CD4-positive, alpha-beta memory T cell (primary cell): ENCODE measurements at regions of chr2 and their contacts with region 1.

Region 1: DNA sequence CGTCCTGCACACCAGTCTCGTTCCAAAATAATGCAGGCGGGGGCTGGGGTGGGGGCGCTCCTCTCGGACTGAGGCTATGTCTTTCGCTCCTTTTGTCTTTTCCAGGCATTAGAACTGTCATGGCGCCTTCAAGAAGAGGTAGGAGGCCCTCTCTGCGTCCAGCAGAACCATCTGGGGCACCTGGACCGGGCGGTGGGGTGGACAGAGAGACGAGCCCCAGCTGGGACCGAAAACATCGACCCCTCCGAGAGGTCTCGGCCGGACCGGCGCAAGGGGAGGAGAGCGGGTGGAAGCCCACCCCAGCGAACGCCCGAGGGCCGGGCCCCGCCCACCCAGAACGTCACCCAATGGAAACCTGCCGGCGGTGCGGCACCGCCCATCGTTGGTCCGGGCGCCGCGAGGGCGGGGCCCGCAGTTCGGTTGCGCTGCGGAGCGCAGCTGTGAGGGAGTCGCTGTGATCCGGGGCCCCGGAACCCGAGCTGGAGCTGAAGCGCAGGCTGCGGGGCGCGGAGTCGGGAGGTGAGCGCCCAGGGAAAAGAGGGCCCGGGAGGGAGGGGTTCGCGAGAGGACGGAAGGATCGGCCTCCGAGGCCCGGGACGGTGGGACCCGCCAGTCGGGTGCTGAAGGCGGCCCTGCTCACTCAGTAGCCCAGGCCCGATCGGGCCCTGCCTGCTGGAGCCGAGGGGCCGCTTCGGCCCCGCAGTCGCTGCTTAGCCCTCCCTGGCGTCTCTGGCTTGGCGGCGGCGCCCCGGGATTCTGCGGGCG is at the start of gene NRBP1:
- DNase-seq: peak; percentile 86 to 91 (median 89)
- H3K4me3 ChIP-seq: peak within 1 kb of the TSS; percentile 64 to 76
- H3K4me3 Mint-ChIP-seq: peak within 1 kb of the TSS; percentile 97 to 100 (median 98)
- H3K27ac ChIP-seq: peak within 1 kb of the TSS; percentile 93
- H3K27ac Mint-ChIP-seq: peak within 1 kb of the TSS; percentile 96 to 99 (median 98)
- H3K4me1 ChIP-seq: peaks cover 45% of the 10 kb centered on the region
- H3K4me1 Mint-ChIP-seq: peaks cover 24 to 44% (median 35%) of the 10 kb centered on the region in 4 donors
- H3K27me3 ChIP-seq: no peaks in the 10 kb centered on the region
- H3K27me3 Mint-ChIP-seq: no peaks in the 10 kb centered on the region
- total RNA-seq, gene NRBP1: 115 to 119 TPM

Region 2: GRCh38 chr2:27086090-27086723 is 342.2 kb before region 1 on chr2:
- CTCF ChIA-PET with region 1: no interaction called
- POLR2A ChIA-PET with region 1: interaction called, 4 read pairs
- intact Hi-C with region 1: loop called (anchors 5 kb)
- DNase-seq: peak; percentile 93 to 99 (median 98)
- H3K4me3 ChIP-seq: peak overlapping the region; percentile 11 to 75
- H3K4me3 Mint-ChIP-seq: peak overlapping the region; percentile 82 to 90 (median 86)
- H3K27ac ChIP-seq: peak overlapping the region; percentile 80
- H3K27ac Mint-ChIP-seq: peak overlapping the region; percentile 82 to 94 (median 89)
- H3K4me1 ChIP-seq: peaks cover 32% of the 10 kb centered on the region
- H3K4me1 Mint-ChIP-seq: peaks cover 9 to 37% (median 23%) of the 10 kb centered on the region in 4 donors
- H3K27me3 ChIP-seq: no peaks in the 10 kb centered on the region
- H3K27me3 Mint-ChIP-seq: no peaks in the 10 kb centered on the region

Region 3: GRCh38 chr2:27313882-27314645 is 114.3 kb before region 1 on chr2:
- CTCF ChIA-PET with region 1: no interaction called
- POLR2A ChIA-PET with region 1: no interaction called
- intact Hi-C with region 1: no loop called
- DNase-seq: no peak
- H3K4me3 ChIP-seq: no peak overlapping the region
- H3K4me3 Mint-ChIP-seq: no peak overlapping the region
- H3K27ac ChIP-seq: no peak overlapping the region
- H3K27ac Mint-ChIP-seq: peak overlapping the region in 1 of 7 donors; percentile 37
- H3K4me1 ChIP-seq: no peaks in the 10 kb centered on the region
- H3K4me1 Mint-ChIP-seq: peaks cover 0 to 4% (median under 1%) of the 10 kb centered on the region in 4 donors
- H3K27me3 ChIP-seq: no peaks in the 10 kb centered on the region
- H3K27me3 Mint-ChIP-seq: no peaks in the 10 kb centered on the region

Region 4: GRCh38 chr2:27356382-27357181 is 71.8 kb before region 1 on chr2 and contains the start of gene GTF3C2:
- CTCF ChIA-PET with region 1: no interaction called
- POLR2A ChIA-PET with region 1: interaction called, 18 read pairs
- intact Hi-C with region 1: loop called (anchors 1 kb)
- DNase-seq: peak; percentile 93 to 97 (median 93)
- H3K4me3 ChIP-seq: peak within 1 kb of the TSS; percentile 49 to 75
- H3K4me3 Mint-ChIP-seq: peak within 1 kb of the TSS; percentile 96 to 100 (median 98)
- H3K27ac ChIP-seq: peak within 1 kb of the TSS; percentile 85
- H3K27ac Mint-ChIP-seq: peak within 1 kb of the TSS; percentile 96 to 100 (median 99)
- H3K4me1 ChIP-seq: peaks cover 51% of the 10 kb centered on the region
- H3K4me1 Mint-ChIP-seq: peaks cover 36 to 64% (median 48%) of the 10 kb centered on the region in 4 donors
- H3K27me3 ChIP-seq: no peaks in the 10 kb centered on the region
- H3K27me3 Mint-ChIP-seq: no peaks in the 10 kb centered on the region
- total RNA-seq, gene GTF3C2: 82.9 to 90.8 TPM

Region 5: DNA sequence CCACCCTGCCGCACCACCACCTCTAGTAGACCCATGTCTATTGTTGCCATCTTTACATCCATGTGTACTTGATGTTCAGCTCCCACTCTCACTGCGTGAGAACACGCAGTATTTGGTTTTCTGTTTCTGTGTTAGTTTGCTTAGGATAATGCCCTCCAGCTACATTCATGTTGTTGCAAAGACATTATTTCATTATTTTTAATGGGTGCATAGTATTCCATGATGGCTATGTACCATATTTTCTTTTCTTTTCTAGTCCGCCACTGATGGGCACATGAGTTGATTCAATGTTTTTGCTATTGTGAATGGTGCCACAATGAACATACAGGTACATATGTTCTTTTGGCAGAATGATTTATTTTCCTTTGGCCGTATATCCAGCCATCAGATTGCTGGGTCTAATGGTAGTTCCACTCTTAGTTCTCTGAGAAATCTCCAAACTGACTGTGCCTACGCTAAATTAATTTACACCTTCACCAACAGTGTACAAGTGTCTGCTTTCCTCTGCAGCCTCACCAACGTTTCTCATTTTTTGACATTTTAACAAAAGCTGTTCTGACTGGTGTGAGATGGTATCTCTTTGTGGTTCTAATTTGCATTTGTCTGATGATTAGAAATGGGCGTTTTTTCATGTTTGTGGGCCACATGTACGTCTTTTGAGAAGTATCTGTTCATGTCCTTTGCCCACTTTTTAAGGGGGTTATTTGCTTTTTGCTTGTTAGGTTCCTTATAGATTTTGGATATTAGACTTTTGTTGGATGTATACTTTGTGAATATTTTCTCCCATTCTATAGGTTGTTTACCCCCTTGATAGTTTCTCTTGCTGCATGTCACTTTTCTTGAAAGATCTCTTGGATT is 37.3 kb before region 1 on chr2:
- CTCF ChIA-PET with region 1: interaction called, 3 read pairs
- POLR2A ChIA-PET with region 1: interaction called, 8 read pairs
- intact Hi-C with region 1: loop called (anchors 1 kb)
- DNase-seq: peak; percentile 57 to 79 (median 69)
- H3K4me3 ChIP-seq: no peak overlapping the region
- H3K4me3 Mint-ChIP-seq: peak overlapping the region; percentile 26 to 79 (median 63)
- H3K27ac ChIP-seq: peak overlapping the region; percentile 66
- H3K27ac Mint-ChIP-seq: peak overlapping the region; percentile 81 to 98 (median 95)
- H3K4me1 ChIP-seq: peaks cover 29% of the 10 kb centered on the region
- H3K4me1 Mint-ChIP-seq: peaks cover 21 to 39% (median 29%) of the 10 kb centered on the region in 4 donors
- H3K27me3 ChIP-seq: no peaks in the 10 kb centered on the region
- H3K27me3 Mint-ChIP-seq: no peaks in the 10 kb centered on the region

Region 6: GRCh38 chr2:27489498-27490397 is 61.4 kb after region 1 on chr2 and contains the start of gene IFT172:
- CTCF ChIA-PET with region 1: no interaction called
- POLR2A ChIA-PET with region 1: interaction called, 10 read pairs
- intact Hi-C with region 1: loop called (anchors 2 kb)
- DNase-seq: peak; percentile 96 to 100 (median 100)
- H3K4me3 ChIP-seq: peak within 1 kb of the TSS; percentile 52 to 92
- H3K4me3 Mint-ChIP-seq: peak within 1 kb of the TSS; percentile 59 to 93 (median 84)
- H3K27ac ChIP-seq: peak within 1 kb of the TSS; percentile 81
- H3K27ac Mint-ChIP-seq: peak within 1 kb of the TSS; percentile 71 to 100 (median 99)
- H3K4me1 ChIP-seq: peaks cover 18% of the 10 kb centered on the region
- H3K4me1 Mint-ChIP-seq: peaks cover 11 to 20% (median 13%) of the 10 kb centered on the region in 4 donors
- H3K27me3 ChIP-seq: peaks cover 6% of the 10 kb centered on the region
- H3K27me3 Mint-ChIP-seq: peaks cover 4% of the 10 kb centered on the region in 2 donors
- total RNA-seq, gene IFT172: 23.6 to 24.4 TPM

Region 7: GRCh38 chr2:27628767-27629709 is 200.6 kb after region 1 on chr2 and contains the starts of genes CCDC121 and GPN1:
- CTCF ChIA-PET with region 1: no interaction called
- POLR2A ChIA-PET with region 1: interaction called, 11 read pairs
- intact Hi-C with region 1: no loop called
- DNase-seq: peak; percentile 93 to 98 (median 94)
- H3K4me3 ChIP-seq: peak within 1 kb of the TSS; percentile 68 to 92
- H3K4me3 Mint-ChIP-seq: peak within 1 kb of the TSS in 2 of 8 donors; percentile 8 to 57
- H3K27ac ChIP-seq: peak within 1 kb of the TSS; percentile 85
- H3K27ac Mint-ChIP-seq: peak within 1 kb of the TSS in 3 of 7 donors; percentile 76 to 85 (median 78)
- H3K4me1 ChIP-seq: peaks cover 17% of the 10 kb centered on the region
- H3K4me1 Mint-ChIP-seq: peaks cover 9 to 21% (median 11%) of the 10 kb centered on the region in 4 donors
- H3K27me3 ChIP-seq: no peaks in the 10 kb centered on the region
- H3K27me3 Mint-ChIP-seq: no peaks in the 10 kb centered on the region
- total RNA-seq, gene CCDC121: 1.3 to 2.2 TPM
- total RNA-seq, gene GPN1: 28.9 to 32.8 TPM